ENCODE measurements at regions of chr6 and their contacts with region 1.

Region 1: GRCh38 chr6:149925974-149926777 is 3.3 kb upstream of the RAET1G start:
- DNase-seq: peak; percentile 94
- ATAC-seq: peak; percentile 94

Region 2: DNA sequence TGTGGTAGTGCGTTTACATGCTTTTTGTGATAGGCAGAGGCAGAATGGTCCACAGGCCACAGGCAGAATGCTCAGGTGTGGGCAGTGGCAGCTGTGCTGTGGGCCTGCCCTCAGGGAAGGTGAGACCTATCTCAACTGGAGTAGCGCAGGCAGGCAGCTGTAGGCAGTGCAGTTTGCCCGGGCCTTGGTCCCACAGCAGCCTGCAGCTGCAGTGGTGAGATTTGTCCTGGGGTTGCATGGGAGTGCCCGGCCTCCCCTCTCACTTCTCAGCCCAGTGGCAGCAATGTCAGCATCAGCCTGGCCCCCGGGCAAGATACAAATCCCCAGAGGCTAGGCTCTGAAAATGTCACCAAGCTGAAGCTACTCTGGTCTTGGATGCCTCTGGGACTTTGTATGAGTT is 374.3 kb before region 1 on chr6:
- intact Hi-C with region 1: loop called (anchors 10 kb)
- DNase-seq: no peak
- ATAC-seq: no peak

Region 3: DNA sequence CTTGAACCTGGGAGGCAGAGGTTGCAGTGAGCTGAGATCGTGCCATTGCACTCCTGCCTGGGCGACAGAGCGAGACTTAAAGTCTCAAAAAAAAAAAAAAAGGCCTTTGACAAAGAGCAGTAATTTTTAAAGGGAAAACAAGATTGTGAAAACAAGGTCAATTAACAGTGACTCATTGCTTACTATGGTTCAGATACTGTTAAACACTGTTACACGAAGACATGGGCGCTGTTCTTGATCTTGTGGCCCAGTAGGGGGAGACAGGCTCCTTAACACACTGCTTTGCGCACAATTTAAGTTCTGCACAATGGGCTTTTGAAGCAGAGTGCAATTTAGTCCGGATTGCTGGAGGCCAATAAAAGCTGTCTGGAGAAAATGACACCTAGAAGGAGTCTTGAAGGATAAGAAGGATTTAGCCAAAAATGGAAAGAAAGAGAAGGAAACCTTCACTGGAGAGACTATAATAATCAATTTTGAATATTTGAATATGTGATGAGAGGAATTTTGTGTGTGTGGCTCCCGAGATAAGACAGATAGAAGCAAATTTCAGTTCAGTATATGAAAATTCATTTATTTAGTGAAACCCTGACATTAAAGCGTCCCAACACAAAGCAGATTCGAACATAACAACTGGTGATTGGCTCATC is 202.3 kb before region 1 on chr6:
- intact Hi-C with region 1: loop called (anchors 10 kb)
- DNase-seq: no peak
- ATAC-seq: peak; percentile 86

Region 4: DNA sequence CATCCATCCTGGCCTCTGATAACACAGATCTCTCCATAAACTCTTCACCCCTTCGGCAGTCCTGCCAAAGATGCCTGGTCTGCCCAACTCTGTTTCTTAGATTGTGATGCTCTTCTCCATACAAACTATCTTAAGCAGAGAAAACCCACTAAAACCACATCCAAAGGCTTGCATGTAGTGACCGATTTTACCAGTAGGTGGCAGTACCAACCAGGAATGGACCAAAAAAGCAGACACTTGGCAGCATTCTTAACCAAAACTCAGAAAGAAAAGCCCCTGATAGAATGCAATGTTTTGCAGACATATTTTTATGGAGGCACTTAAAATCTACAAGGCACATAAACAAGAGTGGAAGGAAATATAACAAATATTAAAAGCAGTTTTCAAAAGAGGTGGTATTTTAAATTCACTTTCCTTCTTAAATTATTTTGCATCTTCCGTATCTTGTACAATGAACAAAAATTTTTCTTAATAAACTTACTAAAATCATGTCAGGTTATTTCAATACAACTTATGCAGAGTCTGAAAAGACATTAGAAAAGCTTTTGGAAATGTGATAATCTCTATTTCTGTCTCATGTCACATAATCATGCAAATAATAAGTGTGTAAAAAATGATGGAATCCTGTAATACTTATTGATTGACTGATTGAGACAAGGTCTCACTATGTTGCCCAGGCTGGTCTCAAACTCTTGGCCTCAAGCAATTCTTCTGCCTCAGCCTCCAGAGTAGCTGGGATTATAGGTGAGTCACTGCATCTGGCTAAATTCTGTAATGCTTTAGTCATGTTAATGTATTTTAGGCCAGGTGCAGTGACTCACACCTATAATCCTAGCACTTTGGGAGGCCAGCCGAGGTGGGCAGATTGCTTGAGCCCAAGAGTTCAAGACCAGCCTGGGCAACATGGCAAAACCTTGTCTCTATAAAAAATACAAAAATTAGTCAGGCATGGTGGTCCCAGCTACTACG is 91.4 kb before region 1 on chr6:
- intact Hi-C with region 1: loop called (anchors 5 kb)
- DNase-seq: no peak
- ATAC-seq: peak; percentile 60